Heart right ventricle (tissue), 16 donors: ENCODE measurements at regions of chr3 and their contacts with region 1.

Region 1: GRCh38 chr3:193572426-193572908 is 17.8 kb upstream of the ATP13A4 start:
- DNase-seq: peak in 1 of 2 donors; percentile 49
- ATAC-seq: peak in 7 of 8 donors; percentile 38 to 76 (median 65)
- H3K4me3 ChIP-seq: no peak overlapping the region
- H3K27ac ChIP-seq: no peak overlapping the region
- H3K4me1 ChIP-seq: no peaks in the 10 kb centered on the region
- H3K27me3 ChIP-seq: peaks cover 0 to 3% (median 0%) of the 10 kb centered on the region in 7 donors
- CTCF ChIP-seq: peak; percentile 56 to 87 (median 78)

Region 2: DNA sequence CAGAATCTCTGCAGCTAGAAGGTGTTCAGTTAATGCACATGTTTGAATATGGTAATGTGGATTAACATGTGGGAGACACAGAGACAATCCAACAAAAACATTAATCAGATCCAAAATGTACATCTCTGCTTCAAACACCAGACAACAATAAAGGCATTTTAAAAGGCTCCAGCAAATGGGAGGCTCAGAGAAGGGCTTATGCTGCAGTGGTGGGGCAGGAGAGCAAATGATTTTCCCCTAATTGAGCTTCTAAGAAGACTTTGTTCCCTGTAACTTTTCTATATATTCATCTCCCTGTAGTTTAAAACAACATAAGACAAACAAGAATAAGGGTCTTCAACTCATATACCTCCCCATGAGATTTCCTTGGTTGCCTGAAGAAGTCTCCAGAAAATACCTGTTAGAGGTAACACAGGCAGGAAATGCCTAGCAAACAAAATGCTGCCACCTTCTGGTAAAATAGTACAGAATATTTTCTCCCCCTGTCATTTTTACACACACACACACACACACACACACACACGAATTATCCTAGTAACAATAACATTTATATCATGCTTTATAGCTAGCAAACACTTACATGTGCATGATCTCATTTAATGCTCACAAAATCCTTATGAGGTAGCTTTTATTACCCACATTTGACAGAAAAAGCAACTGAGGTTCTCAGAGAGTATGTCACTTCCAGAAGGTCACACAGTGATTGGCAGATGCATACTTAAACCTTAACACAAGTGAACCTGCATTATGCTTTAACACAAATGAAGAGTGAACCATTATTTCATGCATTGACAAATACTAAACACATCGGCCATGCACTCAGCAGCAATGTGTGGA is 531.4 kb before region 1 on chr3:
- intact Hi-C with region 1: loop called in 8 of 10 experiments (anchors 5 to 10 kb)
- DNase-seq: peak in 1 of 2 donors; percentile 11
- ATAC-seq: peak in 5 of 8 donors; percentile 23 to 65 (median 48)
- H3K4me3 ChIP-seq: no peak overlapping the region
- H3K27ac ChIP-seq: no peak overlapping the region
- H3K4me1 ChIP-seq: no peaks in the 10 kb centered on the region
- H3K27me3 ChIP-seq: no peaks in the 10 kb centered on the region
- CTCF ChIP-seq: peak; percentile 16 to 76 (median 58)

Region 3: GRCh38 chr3:193190146-193190786 is 382.2 kb before region 1 on chr3:
- intact Hi-C with region 1: loop called in 3 of 10 experiments (anchors 10 kb)
- DNase-seq: no peak
- ATAC-seq: peak in 1 of 8 donors; percentile 35
- H3K4me3 ChIP-seq: no peak overlapping the region
- H3K27ac ChIP-seq: no peak overlapping the region
- H3K4me1 ChIP-seq: peaks cover 0 to 3% (median 0%) of the 10 kb centered on the region in 9 donors
- H3K27me3 ChIP-seq: no peaks in the 10 kb centered on the region
- CTCF ChIP-seq: peak in 8 of 9 donors; percentile 17 to 53 (median 40)

Region 4: DNA sequence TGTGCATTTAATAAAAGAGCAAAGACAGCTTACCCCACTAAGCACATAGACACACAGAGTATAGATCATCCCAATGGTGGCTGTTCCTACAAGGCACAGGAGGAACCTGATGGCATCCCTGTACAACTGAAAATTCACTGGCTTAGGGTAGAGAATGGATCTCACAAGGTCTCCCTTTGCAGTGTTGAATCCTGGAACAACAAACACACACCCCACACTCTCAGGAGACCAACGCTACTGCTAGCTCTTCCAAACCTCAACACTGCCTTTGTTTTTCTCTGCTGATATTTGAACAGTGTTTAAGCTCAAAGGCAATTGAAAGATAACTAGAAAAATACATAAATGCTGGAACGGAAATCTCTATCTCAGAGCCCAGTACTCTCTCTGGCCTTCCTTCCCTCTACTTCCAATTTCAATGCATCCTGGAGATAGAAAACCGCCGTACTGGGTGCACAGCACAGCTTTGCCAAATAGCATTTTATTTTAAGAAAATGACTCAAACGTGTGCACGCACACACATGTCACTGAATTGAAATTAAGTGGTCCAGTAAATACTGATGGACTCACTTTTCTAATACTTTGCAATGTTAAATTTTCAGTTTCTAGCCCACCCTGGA is 106.4 kb before region 1 on chr3:
- intact Hi-C with region 1: loop called in 8 of 10 experiments (anchors 1 to 10 kb)
- DNase-seq: no peak
- ATAC-seq: no peak
- H3K4me3 ChIP-seq: no peak overlapping the region
- H3K27ac ChIP-seq: no peak overlapping the region
- H3K4me1 ChIP-seq: peaks cover 0 to 7% (median 6%) of the 10 kb centered on the region in 9 donors
- H3K27me3 ChIP-seq: no peaks in the 10 kb centered on the region
- CTCF ChIP-seq: no peak